ENCODE measurements at regions of chr9 and their contacts with region 1.

Region 1: GRCh38 chr9:4640027-4640426 is 22.1 kb upstream of the PLPP6 start:
- DNase-seq: peak in 7 of 9 donors; percentile 50 to 72 (median 66)
- ATAC-seq: peak; percentile 70
- H3K4me3 ChIP-seq: no peak overlapping the region
- H3K4me3 Mint-ChIP-seq: no peak overlapping the region
- H3K27ac ChIP-seq: no peak overlapping the region
- H3K27ac Mint-ChIP-seq: peak overlapping the region in 4 of 9 donors; percentile 11 to 62 (median 26)
- H3K4me1 ChIP-seq: peaks cover 0 to 3% of the 10 kb centered on the region in 2 donors
- H3K4me1 Mint-ChIP-seq: peaks cover 0 to 21% (median 15%) of the 10 kb centered on the region in 7 donors
- H3K27me3 ChIP-seq: no peaks in the 10 kb centered on the region
- H3K27me3 Mint-ChIP-seq: no peaks in the 10 kb centered on the region

Region 2: GRCh38 chr9:4315582-4316215 is 324.3 kb before region 1 on chr9:
- CTCF ChIA-PET with region 1: interaction called, 9 read pairs
- POLR2A ChIA-PET with region 1: no interaction called
- intact Hi-C with region 1: loop called (anchors 1 kb)
- DNase-seq: peak; percentile 37 to 74 (median 62)
- ATAC-seq: peak; percentile 89
- H3K4me3 ChIP-seq: no peak overlapping the region
- H3K4me3 Mint-ChIP-seq: no peak overlapping the region
- H3K27ac ChIP-seq: no peak overlapping the region
- H3K27ac Mint-ChIP-seq: no peak overlapping the region
- H3K4me1 ChIP-seq: no peaks in the 10 kb centered on the region
- H3K4me1 Mint-ChIP-seq: peaks cover 0 to 17% (median 6%) of the 10 kb centered on the region in 7 donors
- H3K27me3 ChIP-seq: no peaks in the 10 kb centered on the region
- H3K27me3 Mint-ChIP-seq: peaks cover 0 to 13% (median 0%) of the 10 kb centered on the region in 5 donors

Region 3: DNA sequence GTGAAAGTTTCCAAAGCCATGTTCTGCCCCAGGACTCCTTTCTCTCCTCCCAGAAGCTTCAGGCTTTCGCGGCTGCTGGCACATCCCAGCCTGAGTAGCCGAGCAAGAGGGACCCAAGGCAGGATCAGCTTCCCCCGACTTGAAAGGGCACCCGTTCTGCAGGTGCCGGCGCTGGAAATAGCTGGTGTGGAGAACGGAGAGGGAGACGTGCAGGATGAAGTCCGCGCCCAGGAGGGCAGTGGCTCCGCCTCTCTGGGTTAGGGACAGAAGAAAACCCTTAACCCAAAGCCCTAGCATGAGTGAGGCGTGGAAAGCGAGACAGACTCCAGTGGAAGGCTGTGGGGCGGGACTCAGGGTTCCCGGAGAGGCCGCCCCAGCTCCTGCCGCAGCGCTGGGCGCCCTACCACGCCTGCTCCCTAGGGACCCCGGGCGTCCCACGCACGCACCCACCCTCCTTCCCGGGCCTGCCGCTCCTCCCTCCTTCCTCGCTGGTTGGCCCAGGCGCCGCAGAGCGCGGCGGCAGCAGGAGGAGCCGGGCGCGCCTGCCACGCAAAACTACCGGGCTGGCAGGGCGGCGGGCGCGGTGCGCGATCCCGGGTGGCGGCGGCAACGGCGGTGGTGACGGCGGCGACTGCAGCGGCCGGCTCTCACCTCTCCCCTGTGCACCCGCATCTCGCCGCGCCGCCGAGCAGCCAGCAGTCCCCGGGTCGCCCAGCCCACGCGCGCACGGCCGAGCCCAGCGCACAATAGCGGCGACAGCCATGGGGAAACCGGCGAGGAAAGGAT is 149.9 kb before region 1 on chr9 and contains the start of gene SLC1A1:
- CTCF ChIA-PET with region 1: no interaction called
- POLR2A ChIA-PET with region 1: no interaction called
- intact Hi-C with region 1: loop called (anchors 5 to 10 kb)
- DNase-seq: peak in 8 of 9 donors; percentile 8 to 36 (median 28)
- ATAC-seq: peak; percentile 50
- H3K4me3 ChIP-seq: peak within 1 kb of the TSS; percentile 70
- H3K4me3 Mint-ChIP-seq: peak within 1 kb of the TSS; percentile 72 to 92 (median 86)
- H3K27ac ChIP-seq: no peak within 1 kb of the TSS
- H3K27ac Mint-ChIP-seq: no peak within 1 kb of the TSS
- H3K4me1 ChIP-seq: peaks cover 0 to 17% of the 10 kb centered on the region in 2 donors
- H3K4me1 Mint-ChIP-seq: peaks cover 10 to 37% (median 22%) of the 10 kb centered on the region in 7 donors
- H3K27me3 ChIP-seq: peaks cover 6 to 21% of the 10 kb centered on the region in 2 donors
- H3K27me3 Mint-ChIP-seq: peaks cover 24 to 56% (median 43%) of the 10 kb centered on the region in 5 donors
- total RNA-seq, gene SLC1A1: 0.12 TPM in 1 of 5 experiments, not detected in the others

Region 4: GRCh38 chr9:4596165-4596922 is 43.7 kb before region 1 on chr9:
- CTCF ChIA-PET with region 1: interaction called, 4 read pairs
- POLR2A ChIA-PET with region 1: interaction called, 8 read pairs
- intact Hi-C with region 1: loop called in 1 of 2 experiments (anchors 1 kb)
- DNase-seq: peak in 7 of 9 donors; percentile 81 to 94 (median 91)
- ATAC-seq: peak; percentile 95
- H3K4me3 ChIP-seq: peak overlapping the region; percentile 13
- H3K4me3 Mint-ChIP-seq: peak overlapping the region; percentile 29 to 80 (median 68)
- H3K27ac ChIP-seq: peak overlapping the region; percentile 74
- H3K27ac Mint-ChIP-seq: peak overlapping the region; percentile 58 to 99 (median 97)
- H3K4me1 ChIP-seq: peaks cover 30 to 53% of the 10 kb centered on the region in 2 donors
- H3K4me1 Mint-ChIP-seq: peaks cover 32 to 76% (median 60%) of the 10 kb centered on the region in 7 donors
- H3K27me3 ChIP-seq: no peaks in the 10 kb centered on the region
- H3K27me3 Mint-ChIP-seq: peaks cover 0 to 5% (median 0%) of the 10 kb centered on the region in 5 donors

Region 5: GRCh38 chr9:4662108-4662988 is 22.3 kb after region 1 on chr9 and contains the start of gene PLPP6:
- CTCF ChIA-PET with region 1: interaction called, 5 read pairs
- POLR2A ChIA-PET with region 1: interaction called, 6 read pairs
- intact Hi-C with region 1: loop called in 1 of 2 experiments (anchors 2 kb)
- DNase-seq: peak; percentile 55 to 81 (median 76)
- ATAC-seq: peak; percentile 86
- H3K4me3 ChIP-seq: peak within 1 kb of the TSS; percentile 63
- H3K4me3 Mint-ChIP-seq: peak within 1 kb of the TSS; percentile 89 to 98 (median 96)
- H3K27ac ChIP-seq: peak within 1 kb of the TSS; percentile 78
- H3K27ac Mint-ChIP-seq: peak within 1 kb of the TSS; percentile 85 to 98 (median 95)
- H3K4me1 ChIP-seq: peaks cover 21 to 50% of the 10 kb centered on the region in 2 donors
- H3K4me1 Mint-ChIP-seq: peaks cover 41 to 80% (median 64%) of the 10 kb centered on the region in 7 donors
- H3K27me3 ChIP-seq: no peaks in the 10 kb centered on the region
- H3K27me3 Mint-ChIP-seq: peaks cover 0 to 12% (median 0%) of the 10 kb centered on the region in 5 donors
- total RNA-seq, gene PLPP6: 7.4 to 24.1 (median 10.2) TPM